Gastrocnemius medialis (tissue), 4 donors: ENCODE measurements at regions of chr20 and their contacts with region 1.

Region 1: DNA sequence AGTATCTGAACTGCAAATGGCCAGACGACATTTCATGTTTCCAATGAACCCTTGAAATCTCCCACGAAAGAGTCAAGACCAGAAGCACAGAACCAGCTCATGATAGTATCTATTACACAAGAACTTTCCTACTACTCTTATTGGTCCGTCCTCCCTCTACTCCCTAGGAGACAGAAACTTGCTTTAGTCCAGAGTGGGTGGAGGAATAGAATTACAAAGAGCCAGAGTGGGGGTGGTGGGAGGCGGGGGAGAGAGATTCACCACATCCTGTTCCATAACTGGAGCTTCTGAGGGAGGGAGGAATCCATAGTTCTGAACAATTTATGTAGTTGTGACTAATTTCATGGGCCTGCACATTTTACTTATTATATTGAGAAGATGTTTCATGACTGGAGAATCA is 18.5 kb upstream of the WFDC10A start:
- DNase-seq: no peak
- ATAC-seq: no peak
- H3K4me3 ChIP-seq: no peak overlapping the region
- H3K27ac ChIP-seq: no peak overlapping the region
- H3K4me1 ChIP-seq: no peaks in the 10 kb centered on the region
- H3K27me3 ChIP-seq: no peaks in the 10 kb centered on the region
- CTCF ChIP-seq: no peak
- POLR2A ChIP-seq: no peak

Region 2: DNA sequence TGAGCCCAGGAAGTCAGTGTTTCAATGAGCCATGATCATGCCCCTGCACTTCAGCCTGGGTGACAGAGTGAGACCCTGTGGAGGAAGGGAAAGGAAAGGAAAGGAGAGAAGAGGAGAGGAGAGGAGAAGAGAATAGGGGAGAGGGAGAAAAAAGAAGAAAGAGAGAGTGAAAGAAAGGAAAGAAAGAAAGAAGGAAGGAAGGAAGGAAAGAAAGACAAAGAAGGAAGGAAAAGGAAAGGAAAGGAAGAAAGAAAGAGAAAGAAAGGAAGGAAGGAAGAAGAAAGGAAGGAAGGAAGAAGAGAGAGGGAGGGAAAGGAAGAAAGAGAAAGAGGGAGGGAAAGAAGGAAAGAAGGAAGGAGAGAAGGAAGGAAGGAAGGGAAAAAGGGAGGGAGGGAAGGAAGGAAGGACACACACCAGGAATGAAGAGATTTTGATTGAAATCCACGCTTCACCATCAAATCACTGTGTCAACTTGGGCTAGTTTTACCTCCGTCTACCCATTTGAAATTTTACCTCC is 46.2 kb before region 1 on chr20:
- in situ Hi-C with region 1: no loop called
- intact Hi-C with region 1: no loop called
- DNase-seq: no peak
- ATAC-seq: no peak
- H3K4me3 ChIP-seq: no peak overlapping the region
- H3K27ac ChIP-seq: no peak overlapping the region
- H3K4me1 ChIP-seq: no peaks in the 10 kb centered on the region
- H3K27me3 ChIP-seq: no peaks in the 10 kb centered on the region
- CTCF ChIP-seq: no peak
- POLR2A ChIP-seq: no peak

Region 3: GRCh38 chr20:45704969-45705637 is 94.0 kb after region 1 on chr20 and contains the start of gene WFDC10B:
- in situ Hi-C with region 1: loop called in 2 of 4 experiments (anchors 25 kb)
- intact Hi-C with region 1: no loop called
- DNase-seq: no peak
- ATAC-seq: no peak
- H3K4me3 ChIP-seq: no peak within 1 kb of the TSS
- H3K27ac ChIP-seq: no peak within 1 kb of the TSS
- H3K4me1 ChIP-seq: no peaks in the 10 kb centered on the region
- H3K27me3 ChIP-seq: no peaks in the 10 kb centered on the region
- CTCF ChIP-seq: no peak
- POLR2A ChIP-seq: no peak
- total RNA-seq, gene WFDC10B: not detected

Region 4: GRCh38 chr20:45934586-45935415 is 323.7 kb after region 1 on chr20 and contains the start of gene PCIF1:
- in situ Hi-C with region 1: no loop called
- intact Hi-C with region 1: no loop called
- DNase-seq: peak; percentile 98
- ATAC-seq: peak; percentile 91
- H3K4me3 ChIP-seq: peak within 1 kb of the TSS; percentile 83 to 99 (median 98)
- H3K27ac ChIP-seq: peak within 1 kb of the TSS; percentile 97 to 100 (median 100)
- H3K4me1 ChIP-seq: peaks cover 21 to 25% of the 10 kb centered on the region in 2 donors
- H3K27me3 ChIP-seq: no peaks in the 10 kb centered on the region
- CTCF ChIP-seq: no peak
- POLR2A ChIP-seq: peak; percentile 95 to 96
- total RNA-seq, gene PCIF1: 32.1 to 51.2 (median 37.0) TPM